Activated CD8-positive, alpha-beta T cell treated with anti-CD3 and anti-CD28 coated beads for 36 hours (primary cell): ENCODE measurements at regions of chr3 and their contacts with region 1.

Region 1: GRCh38 chr3:71087143-71088018 is 496.1 kb downstream of the FOXP1 start:
- DNase-seq: peak; percentile 71
- ATAC-seq: peak; percentile 72
- H3K4me3 Mint-ChIP-seq: peak overlapping the region; percentile 57
- H3K27ac Mint-ChIP-seq: peak overlapping the region; percentile 93
- H3K4me1 Mint-ChIP-seq: peaks cover 90% of the 10 kb centered on the region
- H3K27me3 Mint-ChIP-seq: no peaks in the 10 kb centered on the region
- CTCF ChIP-seq: no peak

Region 2: GRCh38 chr3:70933105-70933810 is 154.1 kb before region 1 on chr3:
- CTCF ChIA-PET with region 1: no interaction called
- POLR2A ChIA-PET with region 1: no interaction called
- intact Hi-C with region 1: no loop called
- DNase-seq: no peak
- ATAC-seq: no peak
- H3K4me3 Mint-ChIP-seq: no peak overlapping the region
- H3K27ac Mint-ChIP-seq: no peak overlapping the region
- H3K4me1 Mint-ChIP-seq: peaks cover 4% of the 10 kb centered on the region
- H3K27me3 Mint-ChIP-seq: no peaks in the 10 kb centered on the region
- CTCF ChIP-seq: no peak

Region 3: GRCh38 chr3:71069797-71070196 is 17.6 kb before region 1 on chr3:
- CTCF ChIA-PET with region 1: interaction called, 9 read pairs
- POLR2A ChIA-PET with region 1: interaction called, 17 read pairs
- intact Hi-C with region 1: loop called (anchors 1 kb)
- DNase-seq: peak; percentile 88
- ATAC-seq: peak; percentile 43
- H3K4me3 Mint-ChIP-seq: peak overlapping the region; percentile 9
- H3K27ac Mint-ChIP-seq: peak overlapping the region; percentile 79
- H3K4me1 Mint-ChIP-seq: peaks cover 86% of the 10 kb centered on the region
- H3K27me3 Mint-ChIP-seq: no peaks in the 10 kb centered on the region
- CTCF ChIP-seq: peak; percentile 51

Region 4: DNA sequence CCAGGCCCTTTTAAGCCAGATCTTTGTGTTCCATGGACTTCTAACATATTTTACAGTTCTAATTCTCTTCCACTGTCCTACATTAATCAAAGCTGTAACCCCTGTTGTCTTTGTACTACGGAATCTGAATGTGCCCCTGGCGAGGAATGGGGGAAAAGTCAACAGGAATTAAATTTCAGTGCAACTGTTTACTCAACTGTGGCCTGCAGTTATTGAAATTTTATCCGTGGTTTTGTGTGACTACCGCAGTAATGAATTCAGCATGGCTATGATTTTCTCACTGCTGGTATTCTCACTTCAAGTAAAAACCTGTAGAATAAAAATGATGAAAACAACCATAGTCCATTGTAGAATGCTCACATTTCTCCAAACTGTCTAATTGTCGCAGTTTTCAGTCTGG is 108.1 kb after region 1 on chr3:
- CTCF ChIA-PET with region 1: no interaction called
- POLR2A ChIA-PET with region 1: no interaction called
- intact Hi-C with region 1: loop called (anchors 10 kb)
- DNase-seq: no peak
- ATAC-seq: no peak
- H3K4me3 Mint-ChIP-seq: no peak overlapping the region
- H3K27ac Mint-ChIP-seq: peak overlapping the region; percentile 44
- H3K4me1 Mint-ChIP-seq: peaks cover 69% of the 10 kb centered on the region
- H3K27me3 Mint-ChIP-seq: no peaks in the 10 kb centered on the region
- CTCF ChIP-seq: no peak

Region 5: DNA sequence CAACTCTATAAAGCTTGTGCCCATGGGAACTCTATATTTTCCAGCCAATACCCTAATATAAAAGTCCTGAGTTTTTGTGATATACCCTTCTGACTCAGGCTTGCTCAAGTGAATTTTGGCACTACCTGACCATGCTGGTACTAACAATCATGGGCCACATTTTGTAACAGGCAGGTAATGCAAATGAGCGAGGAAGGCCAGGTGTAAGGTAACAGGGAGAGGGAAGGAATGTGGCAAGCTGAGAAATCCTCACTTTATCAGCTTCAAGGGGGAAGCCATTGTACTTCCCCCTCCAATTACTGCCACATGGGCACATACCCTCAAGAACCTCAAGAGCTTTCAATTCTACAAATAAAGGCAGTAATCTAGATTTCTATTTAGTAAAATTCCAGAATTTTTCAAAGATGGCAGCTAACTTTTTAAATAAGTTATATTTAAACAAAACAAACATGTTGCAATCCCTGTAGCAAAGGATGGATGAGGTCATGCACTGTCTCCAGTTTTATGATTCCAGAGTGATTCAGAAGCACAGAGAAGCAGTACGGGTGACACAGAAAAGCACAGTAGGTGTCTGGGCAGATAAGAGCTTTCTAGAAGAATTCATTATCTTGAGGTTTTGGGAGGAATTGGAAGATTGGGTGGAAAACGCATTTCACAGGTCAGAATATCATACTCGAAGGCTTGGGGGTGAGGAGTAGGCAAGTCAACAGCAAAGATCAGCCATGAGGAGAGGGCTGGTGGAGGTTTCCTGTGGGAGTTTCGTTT is 408.5 kb after region 1 on chr3:
- CTCF ChIA-PET with region 1: no interaction called
- POLR2A ChIA-PET with region 1: no interaction called
- intact Hi-C with region 1: loop called (anchors 10 kb)
- DNase-seq: peak; percentile 59
- ATAC-seq: peak; percentile 63
- H3K4me3 Mint-ChIP-seq: peak overlapping the region; percentile 64
- H3K27ac Mint-ChIP-seq: peak overlapping the region; percentile 95
- H3K4me1 Mint-ChIP-seq: peaks cover 82% of the 10 kb centered on the region
- H3K27me3 Mint-ChIP-seq: no peaks in the 10 kb centered on the region
- CTCF ChIP-seq: no peak